Activated naive CD4-positive, alpha-beta T cell treated with anti-CD3 and anti-CD28 coated beads for 36 hours (primary cell): ENCODE measurements at regions of chr2 and their contacts with region 1.

Region 1: DNA sequence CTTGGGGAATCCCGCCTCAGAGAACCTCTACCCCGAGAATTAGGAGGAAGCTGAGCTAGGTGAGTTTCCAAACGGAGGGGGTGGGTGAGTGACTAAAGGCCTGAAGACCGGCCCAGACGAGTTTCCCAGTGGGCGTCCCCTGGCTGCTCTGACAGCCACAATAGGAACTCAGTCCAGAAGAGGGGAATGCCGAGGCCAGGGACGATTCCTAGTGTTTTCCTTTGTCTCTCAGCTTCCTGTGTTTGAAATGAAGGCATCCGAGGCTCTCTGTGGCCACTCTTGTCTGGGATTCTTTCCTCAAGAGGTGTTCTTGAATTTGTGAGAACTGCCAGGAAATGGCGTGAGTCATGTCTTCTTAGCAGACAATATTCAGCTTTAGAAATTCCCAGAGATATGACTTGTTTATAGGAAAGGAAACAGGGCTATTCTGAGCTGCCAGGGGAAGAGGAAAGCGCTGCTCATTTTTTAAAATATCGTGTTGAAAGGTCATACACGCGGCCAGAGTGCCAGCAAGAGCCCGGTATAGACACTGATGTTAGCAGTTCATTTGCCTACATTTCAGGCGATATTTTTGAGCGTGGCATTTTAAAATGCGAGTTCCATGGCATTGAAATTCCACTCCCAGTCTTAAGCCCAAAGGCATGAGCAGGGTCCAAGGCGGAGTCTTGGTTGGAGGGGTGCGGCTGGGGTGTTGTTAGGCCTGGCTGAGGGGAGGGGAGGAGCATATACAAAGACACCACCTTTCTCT is 169.1 kb upstream of the KLF7 start:
- DNase-seq: peak; percentile 63
- H3K4me3 Mint-ChIP-seq: no peak overlapping the region
- H3K27ac Mint-ChIP-seq: peak overlapping the region; percentile 84
- H3K4me1 Mint-ChIP-seq: peaks cover 71% of the 10 kb centered on the region
- H3K27me3 Mint-ChIP-seq: no peaks in the 10 kb centered on the region

Region 2: GRCh38 chr2:206800506-206801417 is 534.0 kb before region 1 on chr2:
- CTCF ChIA-PET with region 1: no interaction called
- intact Hi-C with region 1: loop called (anchors 5 kb)
- DNase-seq: peak; percentile 70
- H3K4me3 Mint-ChIP-seq: no peak overlapping the region
- H3K27ac Mint-ChIP-seq: no peak overlapping the region
- H3K4me1 Mint-ChIP-seq: peaks cover 31% of the 10 kb centered on the region
- H3K27me3 Mint-ChIP-seq: no peaks in the 10 kb centered on the region

Region 3: DNA sequence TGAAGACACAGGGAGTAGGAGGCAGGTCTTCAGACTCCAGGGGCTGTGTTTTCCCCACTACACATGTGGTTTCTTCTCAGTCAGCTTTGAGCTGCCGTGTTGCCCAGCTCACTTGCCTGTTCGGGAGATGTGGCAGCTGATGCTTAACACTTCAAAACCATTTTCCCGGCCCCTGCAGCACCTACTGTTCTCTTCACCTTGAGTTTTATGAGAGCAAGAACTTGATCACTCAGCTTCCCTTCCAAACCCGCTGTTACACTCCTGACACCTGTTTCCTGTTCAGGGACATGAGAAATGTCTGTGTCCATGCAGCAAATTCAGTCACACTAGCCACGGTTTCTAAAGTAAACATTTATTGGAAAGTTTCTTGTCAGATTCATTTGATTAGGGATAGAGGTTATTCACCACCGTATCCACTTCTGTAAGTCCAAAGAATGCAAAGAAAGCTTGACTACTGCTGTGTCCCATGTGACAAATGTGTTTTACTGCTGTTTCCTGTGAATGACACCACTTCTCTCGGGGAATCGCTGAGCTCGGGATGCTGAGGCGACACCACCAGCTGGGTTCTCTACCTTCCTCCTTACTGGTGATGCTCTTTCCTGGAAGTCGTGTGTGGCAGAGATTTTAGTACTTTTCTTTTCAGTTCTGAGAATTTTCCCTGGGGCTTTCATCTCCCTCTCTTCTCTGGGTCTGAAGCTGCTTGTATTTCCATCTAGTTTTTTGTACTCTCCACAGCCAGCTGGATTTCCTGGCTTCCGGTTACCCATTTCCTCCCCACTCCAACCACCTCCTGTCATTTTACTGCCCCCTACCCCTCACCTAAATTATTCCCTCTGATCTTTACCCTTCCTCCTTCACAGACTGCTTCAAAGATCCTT is 260.8 kb before region 1 on chr2:
- CTCF ChIA-PET with region 1: no interaction called
- intact Hi-C with region 1: loop called (anchors 5 kb)
- DNase-seq: peak; percentile 72
- H3K4me3 Mint-ChIP-seq: peak overlapping the region; percentile 64
- H3K27ac Mint-ChIP-seq: peak overlapping the region; percentile 85
- H3K4me1 Mint-ChIP-seq: peaks cover 27% of the 10 kb centered on the region
- H3K27me3 Mint-ChIP-seq: no peaks in the 10 kb centered on the region

Region 4: DNA sequence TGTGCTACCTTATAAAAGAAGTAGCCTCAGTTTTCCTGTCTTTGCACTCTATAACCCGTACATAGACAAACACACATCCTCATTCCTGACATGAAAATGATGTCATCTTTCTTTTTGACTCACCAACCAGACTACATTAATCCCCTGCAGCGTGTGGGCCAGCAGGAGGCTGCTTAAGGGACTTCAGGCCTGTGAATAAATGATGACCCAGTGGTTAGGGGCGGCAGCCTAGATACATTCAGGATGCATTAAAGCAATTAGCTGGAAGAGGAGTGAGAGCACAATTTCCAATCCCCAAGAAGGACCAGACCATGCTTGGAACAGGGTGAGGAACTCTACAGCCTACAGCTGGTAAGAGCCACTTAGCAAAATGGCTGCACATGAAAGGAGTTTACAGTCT is 111.7 kb before region 1 on chr2:
- CTCF ChIA-PET with region 1: interaction called, 3 read pairs
- intact Hi-C with region 1: loop called (anchors 1 kb)
- DNase-seq: peak; percentile 50
- H3K4me3 Mint-ChIP-seq: no peak overlapping the region
- H3K27ac Mint-ChIP-seq: peak overlapping the region; percentile 32
- H3K4me1 Mint-ChIP-seq: peaks cover 43% of the 10 kb centered on the region
- H3K27me3 Mint-ChIP-seq: no peaks in the 10 kb centered on the region

Region 5: GRCh38 chr2:207288628-207289027 is 46.2 kb before region 1 on chr2:
- CTCF ChIA-PET with region 1: no interaction called
- intact Hi-C with region 1: loop called (anchors 1 kb)
- DNase-seq: peak; percentile 84
- H3K4me3 Mint-ChIP-seq: no peak overlapping the region
- H3K27ac Mint-ChIP-seq: peak overlapping the region; percentile 33
- H3K4me1 Mint-ChIP-seq: peaks cover 73% of the 10 kb centered on the region
- H3K27me3 Mint-ChIP-seq: no peaks in the 10 kb centered on the region

Region 6: DNA sequence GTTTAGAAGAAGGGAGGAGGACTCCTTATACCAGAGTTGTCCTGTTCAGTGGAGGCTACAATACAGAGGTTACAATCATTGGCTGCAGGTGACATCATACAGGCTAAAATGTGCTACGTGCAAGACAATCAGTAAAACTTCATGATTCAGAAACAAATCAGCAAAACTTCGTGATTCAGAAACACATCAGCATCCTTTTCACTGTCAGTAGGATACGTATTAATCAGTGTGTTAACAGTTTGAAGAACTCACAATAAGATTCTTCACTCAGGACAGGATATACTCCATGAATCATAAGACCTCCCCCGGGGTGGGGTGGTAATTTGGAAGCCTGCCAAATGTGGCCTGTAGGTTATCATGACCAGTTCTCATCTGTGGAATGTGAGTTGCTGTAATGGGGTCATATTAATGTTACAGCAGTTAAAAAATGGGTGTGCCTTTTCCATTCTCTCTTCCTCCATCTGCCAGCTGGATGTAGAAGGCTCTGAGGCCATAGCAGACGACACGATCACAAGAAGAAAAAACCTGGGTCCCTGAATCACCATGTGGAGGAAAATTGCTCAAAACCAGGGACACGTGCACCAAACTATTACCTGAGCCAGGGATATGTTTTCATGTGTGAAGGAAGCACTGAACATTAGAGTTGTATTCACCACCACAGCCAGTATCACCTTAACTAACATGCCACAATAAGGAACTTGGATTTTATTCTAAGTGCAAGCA is 60.2 kb after region 1 on chr2:
- CTCF ChIA-PET with region 1: no interaction called
- intact Hi-C with region 1: loop called (anchors 2 kb)
- DNase-seq: peak; percentile 71
- H3K4me3 Mint-ChIP-seq: no peak overlapping the region
- H3K27ac Mint-ChIP-seq: peak overlapping the region; percentile 7
- H3K4me1 Mint-ChIP-seq: peaks cover 8% of the 10 kb centered on the region
- H3K27me3 Mint-ChIP-seq: no peaks in the 10 kb centered on the region

Region 7: DNA sequence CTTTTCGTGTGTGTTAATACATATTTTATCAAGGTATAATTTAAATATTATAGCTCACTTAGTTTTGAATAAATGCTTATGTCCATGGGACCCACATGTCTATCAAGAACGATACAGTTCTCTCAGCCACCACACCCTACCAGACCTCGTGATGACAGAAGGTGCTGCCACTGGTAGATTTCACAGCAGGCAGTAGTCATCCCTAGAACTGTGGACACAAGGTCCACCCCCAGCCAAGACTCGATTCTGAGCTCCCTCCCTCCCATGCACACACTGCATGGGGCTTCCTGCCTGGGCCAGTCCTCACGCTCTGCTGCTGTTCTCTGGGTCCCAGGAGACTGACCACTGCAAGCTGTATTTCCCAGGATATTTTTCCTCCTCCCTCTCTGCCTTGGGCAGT is 168.4 kb after region 1 on chr2:
- CTCF ChIA-PET with region 1: no interaction called
- intact Hi-C with region 1: loop called (anchors 5 kb)
- DNase-seq: no peak
- H3K4me3 Mint-ChIP-seq: no peak overlapping the region
- H3K27ac Mint-ChIP-seq: no peak overlapping the region
- H3K4me1 Mint-ChIP-seq: peaks cover 47% of the 10 kb centered on the region
- H3K27me3 Mint-ChIP-seq: no peaks in the 10 kb centered on the region